Mammary epithelial cell (primary cell): ENCODE measurements at regions of chr19 and their contacts with region 1.

Region 1: DNA sequence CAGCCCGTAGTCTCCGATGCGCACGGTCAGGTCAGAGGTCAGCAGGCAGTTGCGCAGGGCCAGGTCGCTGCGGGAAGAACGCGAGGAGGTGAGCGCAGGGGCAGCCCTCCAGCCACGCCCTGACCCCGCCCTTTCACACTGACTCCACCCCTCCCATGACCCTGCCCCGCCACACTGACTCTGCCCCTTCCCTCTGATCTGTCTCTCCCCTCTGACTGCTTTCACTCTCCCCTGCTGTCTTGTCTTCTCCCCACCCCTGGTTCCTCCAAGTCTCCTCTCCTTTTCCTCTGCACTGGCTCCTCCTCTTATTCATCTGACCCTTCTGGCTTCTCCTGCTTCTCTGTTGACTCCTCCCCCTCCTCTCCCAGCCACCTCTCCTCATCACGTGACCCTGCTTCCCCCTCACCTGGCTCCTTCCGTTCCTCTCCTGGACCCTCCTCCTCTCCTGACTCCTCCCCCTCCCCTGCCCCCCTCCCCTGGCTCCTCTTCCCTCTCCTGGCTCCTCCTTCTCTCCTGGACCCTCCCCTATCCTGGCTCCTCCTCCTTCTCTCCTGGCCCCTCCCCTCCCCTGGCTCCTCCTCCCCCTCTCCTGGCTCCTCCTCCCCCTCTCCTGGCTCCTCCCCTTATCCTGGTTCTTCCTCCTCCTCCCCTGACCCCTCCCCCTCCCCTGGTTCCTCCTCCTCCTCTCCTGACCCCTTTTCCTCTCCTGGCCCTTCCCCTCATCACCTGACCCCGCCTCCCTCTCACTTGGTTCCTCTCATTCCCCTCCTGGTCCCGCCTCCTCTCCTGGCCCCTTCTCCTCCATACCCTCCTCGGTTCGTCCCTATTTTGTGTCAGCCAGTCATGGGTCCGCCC is 9.9 kb downstream of the LMTK3 start:
- DNase-seq: peak; percentile 97
- H3K4me3 ChIP-seq: peak overlapping the region; percentile 28 to 54 (median 47)
- H3K27ac ChIP-seq: no peak overlapping the region
- H3K4me1 ChIP-seq: peaks cover 13% of the 10 kb centered on the region
- H3K27me3 ChIP-seq: peaks cover 7% of the 10 kb centered on the region
- CTCF ChIP-seq: no peak

Region 2: GRCh38 chr19:48372904-48373303 is 128.8 kb before region 1 on chr19:
- CTCF ChIA-PET with region 1: no interaction called
- dilution Hi-C with region 1: no loop called
- in situ Hi-C with region 1: no loop called
- intact Hi-C with region 1: no loop called
- DNase-seq: peak; percentile 46
- H3K4me3 ChIP-seq: no peak overlapping the region
- H3K27ac ChIP-seq: no peak overlapping the region
- H3K4me1 ChIP-seq: peaks cover 5% of the 10 kb centered on the region
- H3K27me3 ChIP-seq: no peaks in the 10 kb centered on the region
- CTCF ChIP-seq: no peak

Region 3: DNA sequence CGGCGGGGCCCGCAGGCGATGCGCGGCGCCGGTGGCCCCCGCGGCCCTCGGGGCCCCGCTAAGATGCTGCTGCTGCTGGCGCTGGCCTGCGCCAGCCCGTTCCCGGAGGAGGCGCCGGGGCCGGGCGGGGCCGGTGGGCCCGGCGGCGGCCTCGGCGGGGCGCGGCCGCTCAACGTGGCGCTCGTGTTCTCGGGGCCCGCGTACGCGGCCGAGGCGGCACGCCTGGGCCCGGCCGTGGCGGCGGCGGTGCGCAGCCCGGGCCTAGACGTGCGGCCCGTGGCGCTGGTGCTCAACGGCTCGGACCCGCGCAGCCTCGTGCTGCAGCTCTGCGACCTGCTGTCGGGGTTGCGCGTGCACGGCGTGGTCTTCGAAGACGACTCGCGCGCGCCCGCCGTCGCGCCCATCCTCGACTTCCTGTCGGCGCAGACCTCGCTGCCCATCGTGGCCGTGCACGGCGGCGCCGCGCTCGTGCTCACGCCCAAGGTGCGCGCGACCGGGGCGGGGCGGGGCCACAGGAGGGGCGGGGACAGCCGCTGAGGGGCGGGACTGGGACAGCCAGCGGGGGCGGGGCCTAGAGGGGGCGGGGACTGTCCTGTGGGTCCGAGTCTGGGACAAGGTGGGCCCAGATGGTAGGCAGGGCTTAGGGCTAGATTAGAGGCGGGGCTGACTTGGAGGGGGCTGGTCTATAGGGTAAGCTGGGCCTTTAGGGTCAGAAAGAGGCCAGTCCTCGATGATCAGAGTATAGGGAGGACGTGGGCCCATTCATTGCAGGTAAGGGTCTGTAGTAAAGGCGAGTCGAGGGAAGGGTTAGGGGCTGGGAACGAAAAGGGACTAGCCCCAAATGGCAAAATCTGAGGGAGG is 103.1 kb before region 1 on chr19:
- CTCF ChIA-PET with region 1: no interaction called
- dilution Hi-C with region 1: no loop called
- in situ Hi-C with region 1: no loop called
- intact Hi-C with region 1: no loop called
- DNase-seq: peak; percentile 42
- H3K4me3 ChIP-seq: peak overlapping the region; percentile 17 to 56 (median 54)
- H3K27ac ChIP-seq: no peak overlapping the region
- H3K4me1 ChIP-seq: peaks cover 19% of the 10 kb centered on the region
- H3K27me3 ChIP-seq: peaks cover 10% of the 10 kb centered on the region
- CTCF ChIP-seq: no peak

Region 4: GRCh38 chr19:48582168-48582567 is 80.4 kb after region 1 on chr19:
- CTCF ChIA-PET with region 1: interaction called, 54 read pairs
- dilution Hi-C with region 1: no loop called
- in situ Hi-C with region 1: loop called (anchors 5 kb)
- intact Hi-C with region 1: loop called (anchors 1 kb)
- DNase-seq: no peak
- H3K4me3 ChIP-seq: no peak overlapping the region
- H3K27ac ChIP-seq: no peak overlapping the region
- H3K4me1 ChIP-seq: no peaks in the 10 kb centered on the region
- H3K27me3 ChIP-seq: no peaks in the 10 kb centered on the region
- CTCF ChIP-seq: no peak

Region 5: DNA sequence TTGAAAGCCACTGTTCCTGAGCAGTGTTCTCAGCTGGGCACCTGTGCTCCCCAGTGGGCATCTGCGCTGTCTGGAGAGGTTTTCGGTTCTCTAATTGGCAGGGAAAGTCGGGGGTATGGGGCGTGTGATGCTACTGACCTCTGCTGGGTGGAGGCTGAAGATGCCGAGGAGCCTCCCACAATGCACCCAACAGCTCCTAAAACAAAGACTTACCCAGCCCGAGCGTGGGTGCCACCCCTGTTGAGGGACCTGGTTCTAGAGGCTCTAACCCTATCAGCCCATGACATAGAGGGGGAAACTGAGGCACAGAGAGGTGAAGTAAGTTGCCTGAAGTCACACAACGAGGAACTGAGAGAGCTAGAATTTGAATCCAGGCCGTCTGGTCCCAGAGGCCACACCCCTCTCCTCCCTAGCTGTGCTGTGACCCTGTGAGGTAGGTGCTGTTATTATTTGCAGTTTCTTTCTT is 107.1 kb after region 1 on chr19:
- CTCF ChIA-PET with region 1: interaction called, 3 read pairs
- dilution Hi-C with region 1: no loop called
- in situ Hi-C with region 1: no loop called
- intact Hi-C with region 1: loop called (anchors 1 kb)
- DNase-seq: no peak
- H3K4me3 ChIP-seq: no peak overlapping the region
- H3K27ac ChIP-seq: no peak overlapping the region
- H3K4me1 ChIP-seq: peaks cover 3% of the 10 kb centered on the region
- H3K27me3 ChIP-seq: no peaks in the 10 kb centered on the region
- CTCF ChIP-seq: peak; percentile 50 to 59

Region 6: GRCh38 chr19:48899781-48900476 is 398.2 kb after region 1 on chr19 and contains the start of gene NUCB1:
- CTCF ChIA-PET with region 1: no interaction called
- dilution Hi-C with region 1: no loop called
- in situ Hi-C with region 1: no loop called
- intact Hi-C with region 1: no loop called
- DNase-seq: peak; percentile 98
- H3K4me3 ChIP-seq: peak within 1 kb of the TSS; percentile 79 to 90 (median 83)
- H3K27ac ChIP-seq: peak within 1 kb of the TSS; percentile 82
- H3K4me1 ChIP-seq: peaks cover 3% of the 10 kb centered on the region
- H3K27me3 ChIP-seq: peaks cover 3% of the 10 kb centered on the region
- CTCF ChIP-seq: peak in 1 of 2 donors; percentile 48
- total RNA-seq, gene NUCB1: 132 to 133 TPM